Heart left ventricle (tissue), 16 donors: ENCODE measurements at regions of chrX and their contacts with region 1.

Region 1: GRCh38 chrX:8815464-8816065 is 14.4 kb upstream of the FAM9A start:
- DNase-seq: no peak
- ATAC-seq: no peak
- H3K4me3 ChIP-seq: no peak overlapping the region
- H3K27ac ChIP-seq: no peak overlapping the region
- H3K4me1 ChIP-seq: no peaks in the 10 kb centered on the region
- H3K27me3 ChIP-seq: peaks cover 0 to 8% (median 0%) of the 10 kb centered on the region in 9 donors
- CTCF ChIP-seq: peak; percentile 46 to 82 (median 66)
- POLR2A ChIP-seq: no peak

Region 2: GRCh38 chrX:8748855-8749254 is 66.7 kb before region 1 on chrX:
- intact Hi-C with region 1: loop called in 5 of 10 experiments (anchors 2 to 10 kb)
- DNase-seq: no peak
- ATAC-seq: peak in 1 of 4 donors; percentile 57
- H3K4me3 ChIP-seq: no peak overlapping the region
- H3K27ac ChIP-seq: no peak overlapping the region
- H3K4me1 ChIP-seq: no peaks in the 10 kb centered on the region
- H3K27me3 ChIP-seq: no peaks in the 10 kb centered on the region
- CTCF ChIP-seq: peak in 10 of 12 donors; percentile 28 to 57 (median 44)
- POLR2A ChIP-seq: no peak

Region 3: GRCh38 chrX:8755116-8755515 is 60.4 kb before region 1 on chrX:
- intact Hi-C with region 1: loop called in 3 of 10 experiments (anchors 10 kb)
- DNase-seq: no peak
- ATAC-seq: no peak
- H3K4me3 ChIP-seq: no peak overlapping the region
- H3K27ac ChIP-seq: no peak overlapping the region
- H3K4me1 ChIP-seq: no peaks in the 10 kb centered on the region
- H3K27me3 ChIP-seq: peaks cover 0 to 3% (median 0%) of the 10 kb centered on the region in 9 donors
- CTCF ChIP-seq: no peak
- POLR2A ChIP-seq: no peak

Region 4: DNA sequence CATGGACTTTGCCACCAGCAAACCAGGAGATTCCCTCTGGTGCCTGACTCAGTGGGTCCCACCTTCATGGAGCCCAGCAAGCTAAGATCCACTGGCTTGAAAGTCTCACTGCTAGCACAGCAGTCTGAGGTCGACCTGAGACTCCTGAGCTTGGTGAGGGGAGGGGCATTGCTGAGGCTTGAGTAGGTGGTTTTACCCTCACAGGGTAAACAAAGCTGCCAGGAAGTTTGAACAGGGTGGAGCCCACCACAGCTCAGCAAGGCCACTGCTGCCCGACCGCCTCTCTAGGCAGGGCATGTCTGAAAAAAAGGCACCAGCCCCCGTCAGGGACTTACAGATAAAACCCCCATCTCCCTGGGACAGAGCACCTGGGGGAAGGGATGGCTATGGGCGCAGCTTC is 42.4 kb before region 1 on chrX:
- intact Hi-C with region 1: no loop called
- DNase-seq: no peak
- ATAC-seq: no peak
- H3K4me3 ChIP-seq: no peak overlapping the region
- H3K27ac ChIP-seq: no peak overlapping the region
- H3K4me1 ChIP-seq: no peaks in the 10 kb centered on the region
- H3K27me3 ChIP-seq: peaks cover 0 to 25% (median 0%) of the 10 kb centered on the region in 9 donors
- CTCF ChIP-seq: no peak
- POLR2A ChIP-seq: no peak

Region 5: DNA sequence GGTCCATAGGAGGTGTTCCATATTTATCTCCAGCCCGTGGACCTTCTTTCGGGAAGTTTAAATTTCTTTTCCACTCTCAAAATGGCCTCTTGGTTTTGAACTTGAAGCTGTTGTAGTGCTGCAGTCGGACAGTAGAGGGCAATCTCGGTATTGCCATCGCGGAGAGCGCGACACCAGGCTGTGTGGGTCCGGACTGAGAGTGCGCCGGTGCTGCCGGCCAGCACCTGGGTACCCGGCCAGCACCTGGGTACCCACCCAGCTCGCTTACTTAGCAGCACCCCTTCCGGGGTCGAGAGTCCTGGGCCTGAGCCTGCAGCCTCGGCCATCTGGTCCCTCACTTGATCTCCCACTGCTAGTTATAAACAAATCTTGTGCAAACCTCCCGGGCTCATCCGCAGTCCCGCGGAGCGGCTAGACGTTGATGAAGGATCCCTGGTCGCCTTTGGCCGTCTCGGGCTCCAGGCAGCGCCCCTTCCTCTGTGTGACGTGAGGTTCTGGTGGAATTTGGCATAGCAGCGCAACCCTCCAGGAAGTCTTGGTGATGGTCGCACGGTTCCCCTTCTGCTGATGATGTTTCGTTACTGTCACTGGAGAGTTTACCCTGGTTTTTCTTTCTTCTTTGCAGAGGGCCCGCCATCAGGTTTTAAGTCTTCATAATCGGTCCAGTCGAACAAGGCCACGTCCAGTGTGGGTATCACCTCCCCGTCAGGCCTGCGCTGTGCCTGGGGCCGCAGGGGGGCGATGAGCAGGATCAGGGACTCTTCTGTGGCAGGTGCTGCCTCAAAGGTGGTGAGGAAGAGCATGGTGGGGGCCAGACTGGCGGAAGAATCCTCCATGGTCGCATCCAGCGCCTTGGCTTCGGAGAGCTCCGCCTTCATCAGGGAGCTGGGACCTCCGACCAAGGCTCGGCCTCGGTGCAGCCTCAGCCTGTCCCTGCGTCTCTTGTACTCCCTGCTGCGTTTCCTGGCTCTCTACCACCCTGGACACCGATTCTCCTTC is 32.2 kb before region 1 on chrX:
- intact Hi-C with region 1: loop called in 1 of 10 experiments (anchors 1 kb)
- DNase-seq: no peak
- ATAC-seq: peak in 1 of 4 donors; percentile 52
- H3K4me3 ChIP-seq: no peak overlapping the region
- H3K27ac ChIP-seq: no peak overlapping the region
- H3K4me1 ChIP-seq: no peaks in the 10 kb centered on the region
- H3K27me3 ChIP-seq: peaks cover 0 to 3% (median 0%) of the 10 kb centered on the region in 9 donors
- CTCF ChIP-seq: peak in 10 of 12 donors; percentile 16 to 54 (median 40)
- POLR2A ChIP-seq: no peak